ENCODE measurements at regions of chr2 and their contacts with region 1.

Region 1: GRCh38 chr2:191758518-191759507 is 80.9 kb downstream of the NABP1 start:
- DNase-seq: peak; percentile 83
- CTCF ChIP-seq: peak; percentile 57

Region 2: GRCh38 chr2:191748059-191748461 is 10.8 kb before region 1 on chr2:
- CTCF ChIA-PET with region 1: interaction called, 52 read pairs
- POLR2A ChIA-PET with region 1: no interaction called
- DNase-seq: no peak
- CTCF ChIP-seq: no peak

Region 3: DNA sequence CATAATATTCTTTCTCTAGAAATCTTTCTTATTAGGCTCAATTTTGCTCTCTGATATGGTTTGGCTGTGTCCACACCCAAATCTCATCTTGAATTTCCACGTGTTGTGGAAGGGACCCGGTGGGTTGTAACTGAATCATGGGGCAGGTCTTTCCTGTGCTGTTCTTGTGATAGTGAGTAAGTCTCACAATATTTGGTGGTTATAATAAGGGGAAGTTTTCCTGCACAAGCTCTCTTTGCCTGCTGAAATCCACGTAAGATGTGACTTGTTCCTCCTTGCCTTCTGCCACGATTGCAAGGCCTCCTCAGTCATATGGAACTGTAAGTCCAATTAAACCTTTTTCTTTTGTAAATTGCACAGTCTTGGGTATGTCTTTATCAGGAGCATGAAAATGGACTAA is 14.3 kb after region 1 on chr2:
- CTCF ChIA-PET with region 1: interaction called, 12 read pairs
- POLR2A ChIA-PET with region 1: no interaction called
- DNase-seq: no peak
- CTCF ChIP-seq: no peak

Region 4: DNA sequence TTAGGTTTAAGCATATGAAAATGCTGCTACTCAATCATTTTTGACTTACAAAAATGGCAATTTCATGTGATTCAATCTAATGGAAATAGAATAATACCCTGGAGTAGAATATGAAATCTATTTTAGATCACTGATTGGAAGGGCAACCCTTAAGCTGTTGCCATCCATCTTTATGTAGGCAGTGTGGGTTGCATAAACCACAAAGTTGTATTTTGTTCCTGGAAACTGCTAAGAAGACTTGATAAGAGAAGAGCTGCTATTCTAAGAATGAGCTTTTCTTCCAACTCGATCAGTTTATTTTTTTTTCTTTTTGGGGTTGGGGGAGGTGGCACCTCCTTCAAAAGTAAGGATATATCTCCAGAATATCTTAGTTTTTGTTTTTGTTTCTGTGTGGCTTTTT is 27.9 kb after region 1 on chr2:
- CTCF ChIA-PET with region 1: interaction called, 11 read pairs
- POLR2A ChIA-PET with region 1: no interaction called
- DNase-seq: no peak
- CTCF ChIP-seq: no peak

Measured in GM10248 (cell line).